Endothelial cell of umbilical vein (primary cell): ENCODE measurements at regions of chr3 and their contacts with region 1.

Region 1: DNA sequence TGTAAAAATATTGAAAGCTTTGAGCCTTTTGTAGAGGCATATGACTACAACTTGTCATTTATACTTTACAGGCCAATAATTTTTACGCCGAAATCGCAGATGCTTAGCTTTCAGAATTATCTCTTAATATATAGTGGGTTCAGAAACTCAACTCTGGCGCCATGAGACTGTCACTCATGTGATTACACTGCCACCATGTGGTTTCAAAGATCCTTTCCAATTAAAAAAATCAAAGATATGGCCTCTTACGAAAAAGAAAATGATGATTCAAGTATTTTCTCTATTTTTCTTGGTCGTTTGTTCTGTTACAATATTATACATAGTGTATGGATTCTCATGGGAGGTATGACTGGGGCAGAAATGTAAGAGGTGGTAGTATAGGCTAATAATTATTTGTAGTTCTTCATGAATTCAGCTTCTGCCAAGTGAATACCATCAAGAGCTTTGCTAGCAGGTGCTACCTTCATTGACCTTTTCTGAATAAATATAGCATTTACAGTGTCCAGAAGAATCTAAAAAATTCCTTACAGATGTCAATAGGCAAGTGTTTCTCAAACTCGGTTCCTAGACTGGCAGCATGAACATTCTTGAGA is 751.7 kb upstream of the GOLIM4 start:
- DNase-seq: peak; percentile 68
- H3K4me3 ChIP-seq: no peak overlapping the region
- H3K27ac ChIP-seq: no peak overlapping the region
- H3K4me1 ChIP-seq: no peaks in the 10 kb centered on the region
- H3K27me3 ChIP-seq: peaks cover 21 to 36% of the 10 kb centered on the region in 2 experiments
- CTCF ChIP-seq: peak; percentile 43 to 45
- POLR2A ChIP-seq: no peak

Region 2: DNA sequence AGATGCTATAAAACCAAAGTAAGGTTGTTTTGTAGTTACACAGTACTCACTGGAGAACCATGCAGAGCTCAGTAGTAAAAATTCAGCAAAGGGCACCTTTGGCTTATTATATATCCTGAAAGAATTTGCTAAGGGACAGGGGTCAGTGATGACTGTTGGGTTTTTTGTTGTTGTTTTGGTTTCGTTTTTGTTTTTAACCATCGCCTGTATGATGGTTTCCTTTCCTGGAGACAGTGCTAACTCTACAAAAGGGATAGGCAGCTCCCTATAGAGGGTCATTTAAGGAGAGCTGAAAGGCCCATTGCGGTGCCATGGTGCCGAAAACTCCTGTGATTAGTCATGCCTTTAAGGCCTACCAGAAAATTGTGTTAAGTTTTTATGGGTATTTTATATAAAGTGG is 633.5 kb before region 1 on chr3:
- CTCF ChIA-PET with region 1: interaction called, 249 read pairs
- POLR2A ChIA-PET with region 1: no interaction called
- dilution Hi-C with region 1: no loop called
- intact Hi-C with region 1: loop called (anchors 1 kb)
- DNase-seq: no peak
- H3K4me3 ChIP-seq: no peak overlapping the region
- H3K27ac ChIP-seq: no peak overlapping the region
- H3K4me1 ChIP-seq: no peaks in the 10 kb centered on the region
- H3K27me3 ChIP-seq: peaks cover 2 to 5% of the 10 kb centered on the region in 2 experiments
- CTCF ChIP-seq: no peak
- POLR2A ChIP-seq: no peak

Region 3: GRCh38 chr3:168511428-168512014 is 335.9 kb before region 1 on chr3:
- CTCF ChIA-PET with region 1: interaction called, 198 read pairs
- POLR2A ChIA-PET with region 1: no interaction called
- dilution Hi-C with region 1: no loop called
- intact Hi-C with region 1: loop called (anchors 1 kb)
- DNase-seq: peak; percentile 14
- H3K4me3 ChIP-seq: no peak overlapping the region
- H3K27ac ChIP-seq: no peak overlapping the region
- H3K4me1 ChIP-seq: no peaks in the 10 kb centered on the region
- H3K27me3 ChIP-seq: peaks cover 0 to 3% of the 10 kb centered on the region in 2 experiments
- CTCF ChIP-seq: peak; percentile 32 to 59
- POLR2A ChIP-seq: no peak

Region 4: DNA sequence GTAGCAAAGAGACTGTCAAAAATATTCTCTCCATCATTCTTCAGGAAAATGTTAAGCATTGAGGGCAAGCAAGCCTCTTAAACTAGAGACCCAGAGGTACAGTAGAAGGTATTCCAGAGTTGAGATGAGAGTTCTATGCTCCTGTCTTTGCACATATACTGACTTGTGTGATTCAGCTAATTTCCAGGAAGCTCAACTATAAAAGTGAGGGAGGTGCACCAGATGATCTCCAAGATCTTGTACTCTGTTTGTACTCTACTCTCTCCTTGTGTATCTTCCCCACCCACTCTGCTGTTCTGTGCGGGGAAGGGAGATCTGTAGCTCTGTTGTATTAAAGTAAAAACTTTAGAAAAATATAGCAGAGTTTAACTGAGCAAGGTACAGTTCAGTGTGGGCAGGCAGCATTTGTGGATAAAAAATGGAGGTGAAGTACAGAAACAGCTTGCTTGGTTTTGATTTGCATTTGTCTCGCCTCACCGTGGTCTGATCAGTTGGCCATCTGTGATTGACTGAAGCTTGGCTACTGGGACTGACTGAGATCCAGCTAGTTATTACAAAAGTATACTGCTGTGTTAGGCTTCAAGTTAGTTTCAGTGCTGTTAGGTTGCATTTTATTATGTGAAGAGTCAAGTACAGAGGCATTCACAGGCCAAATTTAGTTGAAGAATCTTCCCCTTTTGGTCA is 288.5 kb before region 1 on chr3:
- CTCF ChIA-PET with region 1: interaction called, 17 read pairs
- POLR2A ChIA-PET with region 1: no interaction called
- dilution Hi-C with region 1: no loop called
- intact Hi-C with region 1: no loop called
- DNase-seq: no peak
- H3K4me3 ChIP-seq: no peak overlapping the region
- H3K27ac ChIP-seq: no peak overlapping the region
- H3K4me1 ChIP-seq: no peaks in the 10 kb centered on the region
- H3K27me3 ChIP-seq: no peaks in the 10 kb centered on the region
- CTCF ChIP-seq: no peak
- POLR2A ChIP-seq: no peak

Region 5: DNA sequence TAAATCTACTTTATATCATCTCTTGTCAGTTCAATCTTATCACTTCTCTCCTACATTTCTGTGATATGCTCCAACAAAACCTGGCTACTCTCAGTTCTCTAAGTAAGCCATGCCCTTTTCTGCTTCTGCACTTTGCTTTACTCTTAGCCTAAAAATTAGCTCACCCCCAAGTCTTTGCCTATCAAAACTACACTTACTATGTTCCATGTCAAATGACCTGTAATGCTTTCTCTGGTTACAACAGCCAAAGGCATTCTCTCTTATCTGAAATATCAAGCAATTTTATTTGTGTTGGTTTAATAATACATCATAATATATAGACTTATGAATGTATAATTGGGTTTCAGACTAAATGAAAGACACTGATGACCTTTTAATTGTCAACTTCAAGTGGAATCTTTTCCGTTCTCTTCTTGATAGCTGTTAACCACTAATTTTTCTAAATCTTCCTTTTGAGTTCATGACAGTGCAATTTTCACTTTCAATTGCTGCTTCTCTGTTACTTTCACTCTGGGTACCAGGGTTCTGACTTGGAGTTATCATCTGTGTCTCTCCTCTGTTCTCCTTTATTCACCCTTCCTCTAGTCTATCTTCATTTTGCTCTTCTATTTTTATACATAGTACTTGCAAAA is 132.7 kb before region 1 on chr3:
- CTCF ChIA-PET with region 1: interaction called, 15 read pairs
- POLR2A ChIA-PET with region 1: no interaction called
- dilution Hi-C with region 1: no loop called
- intact Hi-C with region 1: no loop called
- DNase-seq: no peak
- H3K4me3 ChIP-seq: no peak overlapping the region
- H3K27ac ChIP-seq: no peak overlapping the region
- H3K4me1 ChIP-seq: no peaks in the 10 kb centered on the region
- H3K27me3 ChIP-seq: peaks cover 0 to 3% of the 10 kb centered on the region in 2 experiments
- CTCF ChIP-seq: no peak
- POLR2A ChIP-seq: no peak

Region 6: GRCh38 chr3:168813225-168813802 is 34.1 kb before region 1 on chr3:
- CTCF ChIA-PET with region 1: interaction called, 19 read pairs
- POLR2A ChIA-PET with region 1: no interaction called
- dilution Hi-C with region 1: no loop called
- intact Hi-C with region 1: no loop called
- DNase-seq: no peak
- H3K4me3 ChIP-seq: no peak overlapping the region
- H3K27ac ChIP-seq: no peak overlapping the region
- H3K4me1 ChIP-seq: no peaks in the 10 kb centered on the region
- H3K27me3 ChIP-seq: peaks cover 10 to 15% of the 10 kb centered on the region in 2 experiments
- CTCF ChIP-seq: no peak
- POLR2A ChIP-seq: no peak

Region 7: GRCh38 chr3:169278092-169278491 is 430.7 kb after region 1 on chr3:
- CTCF ChIA-PET with region 1: no interaction called
- POLR2A ChIA-PET with region 1: no interaction called
- dilution Hi-C with region 1: no loop called
- intact Hi-C with region 1: no loop called
- DNase-seq: no peak
- H3K4me3 ChIP-seq: no peak overlapping the region
- H3K27ac ChIP-seq: no peak overlapping the region
- H3K4me1 ChIP-seq: peaks cover 6% of the 10 kb centered on the region
- H3K27me3 ChIP-seq: no peaks in the 10 kb centered on the region
- CTCF ChIP-seq: no peak
- POLR2A ChIP-seq: no peak

Region 8: GRCh38 chr3:169744366-169745054 is 897.1 kb after region 1 on chr3:
- CTCF ChIA-PET with region 1: interaction called, 11 read pairs
- POLR2A ChIA-PET with region 1: no interaction called
- dilution Hi-C with region 1: no loop called
- intact Hi-C with region 1: no loop called
- DNase-seq: peak; percentile 74
- H3K4me3 ChIP-seq: no peak overlapping the region
- H3K27ac ChIP-seq: no peak overlapping the region
- H3K4me1 ChIP-seq: no peaks in the 10 kb centered on the region
- H3K27me3 ChIP-seq: peaks cover 2 to 13% of the 10 kb centered on the region in 2 experiments
- CTCF ChIP-seq: peak in 1 of 2 donors; percentile 21
- POLR2A ChIP-seq: no peak